ENCODE measurements at regions of chr9 and their contacts with region 1.

Region 1: DNA sequence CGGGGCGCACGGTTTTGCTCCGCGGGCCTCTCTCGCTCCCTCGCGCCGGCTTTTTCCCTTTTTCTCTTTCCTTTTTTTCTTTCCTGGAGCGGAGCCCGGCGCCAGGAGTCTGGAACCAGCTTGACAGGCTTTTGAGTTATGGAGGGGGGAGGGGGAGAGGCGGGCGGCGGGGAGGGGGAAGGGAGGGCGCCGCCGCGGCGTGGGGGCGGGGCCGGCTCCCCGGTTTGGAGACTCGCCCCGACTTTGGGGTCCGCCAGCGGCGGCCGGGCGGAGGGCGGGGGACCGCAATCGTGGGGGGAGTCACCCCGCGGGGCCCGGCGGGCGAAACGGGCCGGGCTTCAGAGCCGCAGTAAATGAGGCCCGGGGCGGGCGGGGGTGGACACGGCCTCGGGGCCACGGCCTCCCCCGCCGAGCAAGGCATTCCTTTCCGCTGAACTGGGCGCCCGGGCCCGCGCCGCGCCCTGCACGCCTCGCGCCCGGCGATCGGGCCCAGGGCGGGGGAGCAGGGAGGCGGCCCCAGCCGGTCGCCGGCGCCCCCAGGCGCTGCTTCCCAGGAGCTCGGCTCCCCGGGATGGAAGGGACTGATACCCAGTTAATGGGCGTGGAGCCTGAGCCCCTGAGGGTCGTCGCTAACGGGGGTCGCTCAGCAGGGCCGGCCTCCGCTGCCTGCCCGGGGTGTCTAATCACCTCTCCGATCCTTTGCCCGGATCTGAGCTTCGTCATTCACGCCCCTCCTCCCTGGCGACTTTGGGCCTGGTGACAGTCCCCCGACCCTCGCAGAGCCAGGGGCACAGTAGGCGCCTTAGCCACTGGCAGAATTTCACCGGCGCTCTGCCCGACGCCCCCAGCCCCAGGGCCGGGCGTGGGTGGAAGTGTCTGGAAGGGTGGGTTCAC is 138.1 kb downstream of the C9orf50 start:
- DNase-seq: peak; percentile 91 to 94
- H3K4me3 ChIP-seq: peak overlapping the region in 1 of 3 donors; percentile 33
- H3K27ac ChIP-seq: peak overlapping the region; percentile 100
- H3K4me1 ChIP-seq: peaks cover 83 to 89% of the 10 kb centered on the region in 2 donors
- H3K27me3 ChIP-seq: no peaks in the 10 kb centered on the region
- CTCF ChIP-seq: peak in 2 of 6 experiments; percentile 20 to 22
- POLR2A ChIP-seq: no peak

Region 2: GRCh38 chr9:129413537-129414376 is 69.0 kb before region 1 on chr9:
- intact Hi-C with region 1: loop called (anchors 5 kb)
- DNase-seq: peak; percentile 99
- H3K4me3 ChIP-seq: peak overlapping the region in 2 of 3 donors; percentile 43 to 46
- H3K27ac ChIP-seq: peak overlapping the region; percentile 99 to 100 (median 100)
- H3K4me1 ChIP-seq: peaks cover 27 to 32% of the 10 kb centered on the region in 2 donors
- H3K27me3 ChIP-seq: no peaks in the 10 kb centered on the region
- CTCF ChIP-seq: no peak
- POLR2A ChIP-seq: peak; percentile 97 to 98

Region 3: GRCh38 chr9:130343445-130343918 is 860.7 kb after region 1 on chr9:
- intact Hi-C with region 1: no loop called
- DNase-seq: peak in 1 of 2 donors; percentile 33
- H3K4me3 ChIP-seq: no peak overlapping the region
- H3K27ac ChIP-seq: no peak overlapping the region
- H3K4me1 ChIP-seq: no peaks in the 10 kb centered on the region
- H3K27me3 ChIP-seq: no peaks in the 10 kb centered on the region
- CTCF ChIP-seq: peak; percentile 49 to 85 (median 74)
- POLR2A ChIP-seq: no peak

Measured in thyroid gland (tissue), 4 donors.